K562 (cell line): ENCODE measurements at regions of chr11 and their contacts with region 1.

Region 1: DNA sequence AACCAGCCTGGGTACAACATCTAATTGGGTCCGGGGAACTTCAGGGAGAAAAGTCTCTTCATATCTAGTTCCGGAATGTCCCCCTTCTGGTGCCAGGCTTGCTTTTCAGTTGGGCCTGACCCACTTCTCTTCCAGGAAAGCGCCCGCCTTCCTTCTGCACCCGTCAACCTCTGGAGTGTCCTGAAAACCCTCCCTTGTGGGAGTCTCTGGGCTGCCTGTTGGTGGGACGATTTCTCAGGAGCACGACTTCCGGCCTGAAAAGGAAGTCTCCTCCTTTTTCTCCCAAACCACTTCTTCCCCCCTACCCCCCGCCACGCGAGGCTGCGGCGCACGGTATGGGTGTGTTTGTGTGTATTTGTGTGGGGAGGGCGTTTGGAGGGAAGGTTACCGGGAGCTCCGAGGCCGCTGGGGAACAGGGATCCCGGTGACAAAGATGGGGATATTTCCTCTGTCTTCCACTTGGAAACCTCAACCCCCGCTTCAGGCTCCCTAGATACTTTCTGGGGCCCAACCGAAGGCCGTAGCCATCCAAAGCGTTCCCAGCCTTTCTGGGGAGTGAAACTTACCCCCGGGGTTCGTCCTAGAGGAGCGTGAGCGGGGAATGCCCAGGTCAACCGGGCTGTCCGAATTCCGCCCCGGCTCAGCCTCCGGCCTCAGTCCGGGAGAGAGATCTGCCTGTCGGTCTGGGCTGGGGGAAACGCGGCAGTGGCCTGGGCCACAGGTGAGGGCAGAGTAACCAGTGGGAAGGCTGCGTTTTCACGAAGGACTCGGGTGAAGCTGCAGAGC is at the start of gene NKAPD1:
- DNase-seq: peak; percentile 79 to 87 (median 84)
- ATAC-seq: peak; percentile 96
- H3K4me3 ChIP-seq: peak within 1 kb of the TSS; percentile 92
- H3K27ac ChIP-seq: peak within 1 kb of the TSS; percentile 90
- H3K4me1 ChIP-seq: peaks cover 0 to 2% of the 10 kb centered on the region in 2 experiments; a peak in 1 of 5 replicates
- H3K27me3 ChIP-seq: no peaks in the 10 kb centered on the region
- CTCF ChIP-seq: no peak
- EP300 ChIP-seq: no peak
- POLR2A ChIP-seq: peak; percentile 79
- RAD21 ChIP-seq: no peak
- polyA plus RNA-seq, gene NKAPD1: 14.1 to 18.3 TPM

Region 2: DNA sequence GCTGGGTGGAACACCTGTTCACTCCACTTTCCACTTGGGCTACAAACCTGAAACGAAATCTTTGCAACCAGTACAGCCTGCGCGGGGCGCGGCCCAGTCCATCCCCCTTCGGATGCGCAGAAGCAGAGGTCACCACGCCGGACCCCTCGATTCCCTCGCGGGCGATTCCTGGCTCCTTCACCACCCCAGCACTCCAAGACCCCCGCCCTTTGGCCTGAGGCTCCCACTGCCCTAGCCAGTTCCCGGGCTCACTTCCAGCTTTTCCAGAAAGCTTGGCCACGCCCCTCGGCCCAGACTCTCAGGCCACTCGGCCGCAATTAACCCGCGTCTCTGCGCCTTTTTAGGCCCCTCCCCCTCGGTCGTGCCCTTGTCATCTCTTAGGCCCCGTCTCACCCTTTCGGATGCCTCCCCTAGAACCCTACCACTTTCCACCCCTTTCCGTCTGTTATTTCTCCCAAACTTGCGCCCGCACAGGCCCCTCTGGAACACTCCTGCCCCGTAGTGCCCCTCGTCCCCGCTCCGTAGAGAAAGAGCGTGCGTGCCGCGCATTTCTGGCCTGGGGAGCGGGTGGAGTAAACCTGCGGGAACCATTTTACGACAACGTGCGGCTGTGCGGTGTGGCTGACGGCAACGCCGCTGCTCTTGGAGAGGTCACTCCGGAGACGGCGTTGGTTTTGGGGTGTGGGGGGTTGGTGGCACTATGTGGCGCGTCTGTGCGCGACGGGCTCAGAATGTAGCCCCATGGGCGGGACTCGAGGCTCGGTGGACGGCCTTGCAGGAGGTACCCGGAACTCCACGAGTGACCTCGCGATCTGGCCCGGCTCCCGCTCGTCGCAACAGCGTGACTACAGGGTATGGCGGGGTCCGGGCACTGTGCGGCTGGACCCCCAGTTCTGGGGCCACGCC is 49.2 kb before region 1 on chr11 and contains the start of gene DLAT:
- CTCF ChIA-PET with region 1: no interaction called
- POLR2A ChIA-PET with region 1: no interaction called
- in situ Hi-C with region 1: no loop called
- intact Hi-C with region 1: loop called (anchors 1 kb)
- DNase-seq: peak; percentile 86 to 95 (median 87)
- ATAC-seq: peak; percentile 90
- H3K4me3 ChIP-seq: peak within 1 kb of the TSS; percentile 89
- H3K27ac ChIP-seq: peak within 1 kb of the TSS; percentile 87
- H3K4me1 ChIP-seq: peaks cover 6 to 13% of the 10 kb centered on the region in 2 experiments; a peak in 3 of 5 replicates
- H3K27me3 ChIP-seq: no peaks in the 10 kb centered on the region
- CTCF ChIP-seq: no peak
- EP300 ChIP-seq: no peak; the same call in 1 of the 2 replicates
- POLR2A ChIP-seq: peak; percentile 97
- RAD21 ChIP-seq: 0 out of 4 replicates have a peak, but pooled peaks of 1 of the 2 experiments have one; percentile 13
- polyA plus RNA-seq, gene DLAT: 41.7 to 47.6 TPM